B cell (primary cell): ENCODE measurements at regions of chr10 and their contacts with region 1.

Region 1: DNA sequence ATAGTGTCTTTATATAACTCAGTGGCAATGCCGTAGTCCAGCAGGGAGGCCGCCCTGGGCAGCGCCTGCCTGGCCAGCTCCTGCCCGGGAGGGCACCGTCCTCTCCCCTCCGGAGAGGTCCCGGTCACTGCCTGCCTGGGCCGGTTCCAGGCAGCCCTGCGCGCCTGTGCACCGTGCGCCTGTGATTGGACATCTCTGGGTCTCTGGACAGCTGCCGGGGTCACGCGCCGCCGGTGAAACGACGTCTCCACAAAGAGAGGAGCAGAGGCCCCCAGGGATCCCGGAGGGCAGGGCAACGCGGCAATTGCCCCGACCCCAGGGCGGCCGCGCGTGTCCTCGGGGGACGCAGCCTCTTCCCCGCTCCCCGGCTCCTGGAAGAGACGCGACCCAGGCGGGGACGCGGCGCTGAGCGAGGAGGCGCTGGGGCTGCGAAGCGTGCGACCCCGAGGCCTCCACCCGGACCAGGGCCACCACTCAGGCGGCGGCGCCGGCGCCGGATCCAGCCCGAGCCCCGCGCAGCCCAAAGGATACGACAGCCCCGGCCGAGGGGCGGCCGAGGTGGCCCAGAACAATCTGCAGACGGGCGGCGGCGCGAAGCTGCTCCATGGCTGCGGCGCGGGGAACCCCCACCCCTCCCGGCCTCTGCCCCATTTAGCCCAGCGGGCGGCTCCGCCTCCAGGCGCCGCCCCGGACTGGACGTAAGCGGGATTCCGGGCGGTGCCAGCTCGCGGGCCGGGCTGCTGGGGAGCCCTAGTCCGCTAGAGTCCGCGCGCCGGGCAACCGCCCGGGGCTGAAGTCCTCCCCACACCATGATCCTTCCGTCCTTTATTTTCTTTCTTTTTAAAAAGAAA is at the start of gene PHYH:
- DNase-seq: peak; percentile 88
- ATAC-seq: peak; percentile 71
- H3K4me3 ChIP-seq: peak within 1 kb of the TSS in 4 of 5 experiments; percentile 59 to 68 (median 66)
- H3K4me3 Mint-ChIP-seq: peak within 1 kb of the TSS; percentile 88
- H3K27ac ChIP-seq: peak within 1 kb of the TSS; percentile 66 to 71
- H3K27ac Mint-ChIP-seq: peak within 1 kb of the TSS; percentile 83
- H3K4me1 ChIP-seq: peaks cover 9 to 25% of the 10 kb centered on the region in 2 donors
- H3K4me1 Mint-ChIP-seq: peaks cover 20% of the 10 kb centered on the region
- H3K27me3 ChIP-seq: no peaks in the 10 kb centered on the region
- H3K27me3 Mint-ChIP-seq: no peaks in the 10 kb centered on the region
- CTCF ChIP-seq: no peak
- total RNA-seq, gene PHYH: 9.7 and 14.9 TPM in 2 replicates

Region 2: GRCh38 chr10:12068449-12069269 is 1231.0 kb before region 1 on chr10 and contains the start of gene DHTKD1:
- CTCF ChIA-PET with region 1: no interaction called
- POLR2A ChIA-PET with region 1: no interaction called
- intact Hi-C with region 1: loop called (anchors 5 kb)
- DNase-seq: peak; percentile 98
- ATAC-seq: peak; percentile 98
- H3K4me3 ChIP-seq: peak within 1 kb of the TSS; percentile 92 to 98 (median 96)
- H3K4me3 Mint-ChIP-seq: peak within 1 kb of the TSS; percentile 88
- H3K27ac ChIP-seq: peak within 1 kb of the TSS; percentile 80 to 91
- H3K27ac Mint-ChIP-seq: peak within 1 kb of the TSS; percentile 95
- H3K4me1 ChIP-seq: peaks cover 27 to 33% of the 10 kb centered on the region in 2 donors
- H3K4me1 Mint-ChIP-seq: peaks cover 41% of the 10 kb centered on the region
- H3K27me3 ChIP-seq: no peaks in the 10 kb centered on the region
- H3K27me3 Mint-ChIP-seq: no peaks in the 10 kb centered on the region
- CTCF ChIP-seq: peak; percentile 44
- total RNA-seq, gene DHTKD1: 72.3 and 77.0 TPM in 2 replicates

Region 3: DNA sequence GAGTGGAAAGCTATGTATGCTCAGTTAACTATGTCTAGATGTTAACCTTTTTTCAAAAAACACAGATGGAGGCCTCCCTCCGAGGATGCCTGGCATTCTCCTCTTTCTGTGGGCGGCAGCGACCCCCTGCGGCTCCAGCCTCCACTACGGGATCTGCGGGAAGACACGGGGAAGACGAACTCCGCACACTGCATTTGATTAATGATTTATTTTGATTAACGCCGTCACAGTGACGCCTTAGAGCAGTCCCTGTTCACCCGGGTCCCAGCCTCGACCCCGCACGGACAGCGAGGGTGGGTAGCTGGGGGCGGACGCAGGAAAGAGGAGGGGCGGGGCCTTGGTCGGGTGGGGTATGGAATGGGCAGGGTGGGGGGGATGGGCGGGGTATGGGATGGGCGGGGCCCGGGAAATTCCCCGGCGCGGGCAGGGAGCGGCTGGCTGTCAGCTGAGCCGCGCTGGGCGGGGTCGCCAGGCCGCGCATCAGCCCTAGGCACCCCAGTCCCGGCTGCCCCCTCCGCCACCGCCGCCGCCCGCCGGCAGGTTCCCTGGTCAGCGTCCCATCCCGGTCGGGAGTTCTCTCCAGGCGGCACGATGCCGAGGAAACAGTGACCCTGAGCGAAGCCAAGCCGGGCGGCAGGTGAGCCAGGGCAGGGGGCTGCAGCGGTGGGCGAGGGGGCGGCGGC is 199.9 kb before region 1 on chr10 and contains the start of gene OPTN:
- CTCF ChIA-PET with region 1: no interaction called
- POLR2A ChIA-PET with region 1: interaction called, 3 read pairs
- intact Hi-C with region 1: loop called (anchors 1 kb)
- DNase-seq: peak; percentile 89
- ATAC-seq: peak; percentile 87
- H3K4me3 ChIP-seq: peak within 1 kb of the TSS; percentile 57 to 89 (median 71)
- H3K4me3 Mint-ChIP-seq: peak within 1 kb of the TSS; percentile 93
- H3K27ac ChIP-seq: peak within 1 kb of the TSS; percentile 3 to 87
- H3K27ac Mint-ChIP-seq: peak within 1 kb of the TSS; percentile 90
- H3K4me1 ChIP-seq: peaks cover 3 to 13% of the 10 kb centered on the region in 2 donors
- H3K4me1 Mint-ChIP-seq: peaks cover 18% of the 10 kb centered on the region
- H3K27me3 ChIP-seq: no peaks in the 10 kb centered on the region
- H3K27me3 Mint-ChIP-seq: no peaks in the 10 kb centered on the region
- CTCF ChIP-seq: peak; percentile 69
- total RNA-seq, gene OPTN: 42.8 and 42.9 TPM in 2 replicates

Region 4: GRCh38 chr10:13206546-13207443 is 92.9 kb before region 1 on chr10:
- CTCF ChIA-PET with region 1: interaction called, 13 read pairs
- POLR2A ChIA-PET with region 1: no interaction called
- intact Hi-C with region 1: no loop called
- DNase-seq: no peak
- ATAC-seq: no peak
- H3K4me3 ChIP-seq: no peak overlapping the region
- H3K4me3 Mint-ChIP-seq: no peak overlapping the region
- H3K27ac ChIP-seq: no peak overlapping the region
- H3K27ac Mint-ChIP-seq: no peak overlapping the region
- H3K4me1 ChIP-seq: no peaks in the 10 kb centered on the region
- H3K4me1 Mint-ChIP-seq: no peaks in the 10 kb centered on the region
- H3K27me3 ChIP-seq: no peaks in the 10 kb centered on the region
- H3K27me3 Mint-ChIP-seq: no peaks in the 10 kb centered on the region
- CTCF ChIP-seq: peak; percentile 34

Region 5: GRCh38 chr10:13348216-13349017 is 48.8 kb after region 1 on chr10 and contains the start of gene SEPHS1:
- CTCF ChIA-PET with region 1: interaction called, 41 read pairs
- POLR2A ChIA-PET with region 1: interaction called, 7 read pairs
- intact Hi-C with region 1: loop called (anchors 1 kb)
- DNase-seq: peak; percentile 81
- ATAC-seq: peak; percentile 69
- H3K4me3 ChIP-seq: peak within 1 kb of the TSS; percentile 55 to 87 (median 82)
- H3K4me3 Mint-ChIP-seq: peak within 1 kb of the TSS; percentile 92
- H3K27ac ChIP-seq: peak within 1 kb of the TSS; percentile 54 to 82
- H3K27ac Mint-ChIP-seq: peak within 1 kb of the TSS; percentile 93
- H3K4me1 ChIP-seq: peaks cover 26 to 38% of the 10 kb centered on the region in 2 donors
- H3K4me1 Mint-ChIP-seq: peaks cover 58% of the 10 kb centered on the region
- H3K27me3 ChIP-seq: peaks cover 0 to 30% (median 7%) of the 10 kb centered on the region in 4 experiments
- H3K27me3 Mint-ChIP-seq: peaks cover 4% of the 10 kb centered on the region
- CTCF ChIP-seq: no peak
- total RNA-seq, gene SEPHS1: 25.3 and 29.1 TPM in 2 replicates

Region 6: GRCh38 chr10:13371897-13372470 is 72.3 kb after region 1 on chr10:
- CTCF ChIA-PET with region 1: no interaction called
- POLR2A ChIA-PET with region 1: no interaction called
- intact Hi-C with region 1: no loop called
- DNase-seq: peak; percentile 84
- ATAC-seq: peak; percentile 96
- H3K4me3 ChIP-seq: no peak overlapping the region
- H3K4me3 Mint-ChIP-seq: no peak overlapping the region
- H3K27ac ChIP-seq: no peak overlapping the region
- H3K27ac Mint-ChIP-seq: no peak overlapping the region
- H3K4me1 ChIP-seq: no peaks in the 10 kb centered on the region
- H3K4me1 Mint-ChIP-seq: no peaks in the 10 kb centered on the region
- H3K27me3 ChIP-seq: no peaks in the 10 kb centered on the region
- H3K27me3 Mint-ChIP-seq: peaks cover 4% of the 10 kb centered on the region
- CTCF ChIP-seq: peak; percentile 95